Activated CD8-positive, alpha-beta memory T cell treated with anti-CD3 and anti-CD28 coated beads, Interleukin-2, amount 10 ng/mL, durations not matched to agents 7 days and 5 days (primary cell): ENCODE measurements at regions of chr3 and their contacts with region 1.

Region 1: GRCh38 chr3:67113802-67114407 is 115.8 kb downstream of the KBTBD8 start:
- DNase-seq: peak; percentile 88
- ATAC-seq: peak; percentile 91
- H3K4me3 Mint-ChIP-seq: no peak overlapping the region
- H3K27ac Mint-ChIP-seq: no peak overlapping the region
- H3K4me1 Mint-ChIP-seq: peaks cover 4% of the 10 kb centered on the region
- H3K27me3 Mint-ChIP-seq: peaks cover 16% of the 10 kb centered on the region

Region 2: DNA sequence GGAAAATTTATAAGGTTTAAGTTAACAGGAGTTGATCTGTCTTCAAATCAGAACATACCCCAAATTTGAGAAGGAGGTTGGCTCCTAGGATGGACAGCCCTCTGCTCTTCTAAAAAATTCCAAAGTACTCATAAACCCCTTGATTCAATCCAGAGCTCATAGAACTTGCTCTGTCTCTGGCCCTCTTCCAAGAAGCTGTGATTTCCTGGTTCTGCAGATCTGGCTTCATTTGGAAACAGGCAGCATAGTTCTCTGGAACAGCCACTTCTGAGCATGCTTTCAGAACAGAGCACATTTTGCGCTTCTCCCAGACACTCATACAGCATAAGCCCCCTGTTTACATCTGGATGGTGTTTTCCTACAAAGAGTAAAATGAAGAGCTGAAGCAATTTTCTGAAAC is 19.1 kb before region 1 on chr3:
- CTCF ChIA-PET with region 1: interaction called, 13 read pairs
- DNase-seq: no peak
- ATAC-seq: no peak
- H3K4me3 Mint-ChIP-seq: no peak overlapping the region
- H3K27ac Mint-ChIP-seq: no peak overlapping the region
- H3K4me1 Mint-ChIP-seq: no peaks in the 10 kb centered on the region
- H3K27me3 Mint-ChIP-seq: peaks cover 12% of the 10 kb centered on the region

Region 3: GRCh38 chr3:67790043-67790442 is 676.1 kb after region 1 on chr3:
- CTCF ChIA-PET with region 1: interaction called, 16 read pairs
- DNase-seq: peak; percentile 66
- ATAC-seq: peak; percentile 76
- H3K4me3 Mint-ChIP-seq: no peak overlapping the region
- H3K27ac Mint-ChIP-seq: no peak overlapping the region
- H3K4me1 Mint-ChIP-seq: no peaks in the 10 kb centered on the region
- H3K27me3 Mint-ChIP-seq: no peaks in the 10 kb centered on the region

Region 4: DNA sequence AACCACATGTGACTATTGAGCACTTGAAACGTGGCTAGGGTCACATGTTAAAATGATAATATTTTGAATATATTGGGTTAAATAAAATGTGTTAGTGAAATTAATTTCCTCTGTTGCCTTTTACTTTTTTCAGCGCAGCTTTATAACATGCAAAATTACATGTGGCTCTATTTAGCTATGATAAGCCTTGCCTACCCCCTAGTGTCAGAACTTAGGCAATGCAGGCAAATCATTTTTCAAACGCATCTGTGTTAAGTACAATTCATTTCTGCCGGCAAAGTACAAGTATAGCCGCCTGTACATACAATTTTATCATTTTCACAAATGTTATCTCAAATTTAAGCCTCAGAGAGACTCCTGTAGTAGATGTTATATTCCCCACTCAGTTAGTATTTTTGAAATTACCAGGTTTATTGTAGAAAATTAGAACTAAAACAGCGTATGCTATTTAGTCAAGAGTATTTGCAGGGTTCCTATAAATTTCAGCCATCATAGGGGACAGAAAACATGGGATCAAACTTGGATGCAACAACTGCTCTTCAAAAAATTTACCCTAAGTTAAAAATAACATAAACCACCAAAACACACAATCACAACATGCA is 1762.3 kb after region 1 on chr3:
- CTCF ChIA-PET with region 1: interaction called, 23 read pairs
- DNase-seq: no peak
- ATAC-seq: peak; percentile 51
- H3K4me3 Mint-ChIP-seq: no peak overlapping the region
- H3K27ac Mint-ChIP-seq: no peak overlapping the region
- H3K4me1 Mint-ChIP-seq: no peaks in the 10 kb centered on the region
- H3K27me3 Mint-ChIP-seq: peaks cover 16% of the 10 kb centered on the region

Region 5: DNA sequence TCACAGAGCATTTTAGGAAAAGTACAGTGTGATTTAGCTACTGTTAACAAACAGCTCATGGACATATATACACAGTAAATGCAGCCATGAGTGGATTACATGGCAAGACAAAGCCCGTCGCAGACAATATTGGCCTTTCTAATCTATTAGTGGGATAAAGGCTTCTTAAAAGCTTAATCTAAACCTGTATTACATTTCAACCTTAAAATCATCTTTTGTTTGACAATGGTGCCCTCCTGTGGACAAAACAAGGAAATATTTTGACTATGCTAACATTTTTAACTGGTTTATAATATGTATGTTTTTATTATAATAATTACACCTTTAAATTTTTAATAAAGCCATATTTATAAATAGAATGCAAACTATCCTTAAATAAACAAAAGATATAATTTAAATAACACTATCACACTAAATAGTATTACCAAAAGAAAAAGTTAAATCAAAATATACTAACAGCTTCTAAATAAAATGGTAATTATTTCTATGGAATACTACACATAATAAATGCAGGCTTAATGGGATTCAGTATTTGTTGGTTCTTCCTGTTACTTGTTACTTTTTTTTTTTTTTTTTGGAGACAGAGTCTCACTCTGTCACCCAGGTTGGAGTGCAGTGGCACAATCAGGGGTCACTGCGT is 1779.8 kb after region 1 on chr3:
- CTCF ChIA-PET with region 1: interaction called, 11 read pairs
- DNase-seq: no peak
- ATAC-seq: no peak
- H3K4me3 Mint-ChIP-seq: no peak overlapping the region
- H3K27ac Mint-ChIP-seq: no peak overlapping the region
- H3K4me1 Mint-ChIP-seq: peaks cover 5% of the 10 kb centered on the region
- H3K27me3 Mint-ChIP-seq: peaks cover 30% of the 10 kb centered on the region